CD14-positive monocyte (primary cell): ENCODE measurements at regions of chr5 and their contacts with region 1.

Region 1: DNA sequence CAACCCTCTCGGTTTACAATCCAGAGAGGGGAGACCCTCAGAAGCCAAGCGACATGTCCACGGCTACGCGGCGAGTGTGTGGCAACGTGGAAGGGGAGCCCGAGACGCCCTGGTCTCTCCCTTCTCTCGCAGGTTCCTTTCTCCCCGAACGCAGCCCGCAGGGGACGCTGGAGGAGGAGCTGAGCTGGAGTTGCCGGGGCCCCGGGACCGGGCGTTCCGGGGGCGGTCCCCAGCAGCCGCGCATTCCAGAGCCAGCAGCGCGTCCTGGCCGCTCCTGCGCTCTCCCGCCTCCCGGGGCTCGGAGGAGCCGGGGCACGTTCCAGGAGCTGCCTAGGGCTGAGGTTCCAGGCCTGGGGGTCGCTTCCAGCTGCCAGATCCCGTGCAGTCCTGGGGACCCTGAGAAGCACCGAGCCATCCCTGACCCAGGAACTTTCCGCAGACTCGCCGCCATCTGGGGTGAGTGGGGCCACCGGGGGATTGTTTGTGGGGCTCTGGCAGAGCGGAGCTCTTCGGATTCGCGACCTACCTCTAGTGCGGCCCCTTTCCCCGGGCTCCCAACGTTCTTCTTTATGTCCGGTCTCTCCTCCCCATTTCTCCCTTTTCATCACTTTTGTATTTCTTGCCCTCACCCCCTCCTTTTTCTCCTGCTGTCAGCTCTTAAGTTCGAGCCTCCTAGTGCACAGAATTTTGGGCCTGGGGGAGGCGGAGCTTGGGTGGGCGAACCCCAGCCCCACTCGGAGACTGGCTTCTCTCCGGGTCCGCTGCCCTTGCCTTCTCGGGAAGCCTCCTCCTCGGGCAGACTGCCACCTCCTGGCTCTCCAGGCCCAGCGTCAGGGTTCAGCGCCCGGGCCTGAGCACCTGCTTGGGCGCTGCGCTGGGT is at the start of gene SMIM3:
- DNase-seq: peak; percentile 59 to 69 (median 66)
- H3K4me3 ChIP-seq: peak within 1 kb of the TSS; percentile 78 to 96 (median 78)
- H3K4me3 Mint-ChIP-seq: peak within 1 kb of the TSS; percentile 99
- H3K27ac ChIP-seq: peak within 1 kb of the TSS; percentile 78 to 86
- H3K27ac Mint-ChIP-seq: peak within 1 kb of the TSS; percentile 92 to 99 (median 97)
- H3K4me1 ChIP-seq: peaks cover 54 to 57% of the 10 kb centered on the region in 2 donors
- H3K4me1 Mint-ChIP-seq: peaks cover 62% of the 10 kb centered on the region
- H3K27me3 ChIP-seq: no peaks in the 10 kb centered on the region
- H3K27me3 Mint-ChIP-seq: no peaks in the 10 kb centered on the region
- CTCF ChIP-seq: peak; percentile 67
- polyA plus RNA-seq, gene SMIM3: 41.7 to 52.2 (median 45.4) TPM

Region 2: DNA sequence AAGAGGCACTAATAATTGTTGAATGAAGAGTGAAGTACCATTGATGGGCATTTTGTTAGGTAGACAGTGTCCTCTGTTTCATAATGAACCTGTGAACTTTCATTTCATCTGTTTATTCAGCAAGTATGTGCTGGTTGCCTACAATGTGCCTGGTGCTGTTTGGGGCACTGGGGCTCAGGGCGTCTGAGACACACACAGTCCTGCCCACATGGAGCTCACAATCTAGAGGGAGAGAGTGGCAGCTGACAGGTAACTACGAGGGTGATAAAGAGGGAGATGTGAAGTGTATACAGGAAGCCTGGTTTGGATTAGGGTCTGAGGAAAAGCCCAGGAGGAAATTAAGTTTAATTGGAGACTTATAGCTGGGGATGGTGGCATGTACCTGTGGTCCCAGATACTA is 299.3 kb before region 1 on chr5:
- intact Hi-C with region 1: loop called in 1 of 2 experiments (anchors 5 kb)
- DNase-seq: peak in 1 of 3 donors; percentile 2
- H3K4me3 ChIP-seq: no peak overlapping the region
- H3K4me3 Mint-ChIP-seq: no peak overlapping the region
- H3K27ac ChIP-seq: no peak overlapping the region
- H3K27ac Mint-ChIP-seq: peak overlapping the region in 6 of 7 donors; percentile 13 to 92 (median 68)
- H3K4me1 ChIP-seq: peaks cover 36 to 49% of the 10 kb centered on the region in 2 donors
- H3K4me1 Mint-ChIP-seq: peaks cover 56% of the 10 kb centered on the region
- H3K27me3 ChIP-seq: no peaks in the 10 kb centered on the region
- H3K27me3 Mint-ChIP-seq: peaks cover 0 to 20% (median 3%) of the 10 kb centered on the region in 3 donors
- CTCF ChIP-seq: no peak

Region 3: GRCh38 chr5:150700594-150701293 is 78.0 kb before region 1 on chr5 and contains the start of gene RBM22:
- intact Hi-C with region 1: loop called in 1 of 2 experiments (anchors 5 kb)
- DNase-seq: peak; percentile 81 to 89 (median 88)
- H3K4me3 ChIP-seq: peak within 1 kb of the TSS; percentile 66 to 95 (median 88)
- H3K4me3 Mint-ChIP-seq: no peak within 1 kb of the TSS
- H3K27ac ChIP-seq: peak within 1 kb of the TSS; percentile 80 to 98
- H3K27ac Mint-ChIP-seq: no peak within 1 kb of the TSS
- H3K4me1 ChIP-seq: peaks cover 15 to 18% of the 10 kb centered on the region in 2 donors
- H3K4me1 Mint-ChIP-seq: peaks cover 13% of the 10 kb centered on the region
- H3K27me3 ChIP-seq: no peaks in the 10 kb centered on the region
- H3K27me3 Mint-ChIP-seq: no peaks in the 10 kb centered on the region
- CTCF ChIP-seq: peak; percentile 85
- polyA plus RNA-seq, gene RBM22: 37.9 to 68.4 (median 47.4) TPM

Region 4: DNA sequence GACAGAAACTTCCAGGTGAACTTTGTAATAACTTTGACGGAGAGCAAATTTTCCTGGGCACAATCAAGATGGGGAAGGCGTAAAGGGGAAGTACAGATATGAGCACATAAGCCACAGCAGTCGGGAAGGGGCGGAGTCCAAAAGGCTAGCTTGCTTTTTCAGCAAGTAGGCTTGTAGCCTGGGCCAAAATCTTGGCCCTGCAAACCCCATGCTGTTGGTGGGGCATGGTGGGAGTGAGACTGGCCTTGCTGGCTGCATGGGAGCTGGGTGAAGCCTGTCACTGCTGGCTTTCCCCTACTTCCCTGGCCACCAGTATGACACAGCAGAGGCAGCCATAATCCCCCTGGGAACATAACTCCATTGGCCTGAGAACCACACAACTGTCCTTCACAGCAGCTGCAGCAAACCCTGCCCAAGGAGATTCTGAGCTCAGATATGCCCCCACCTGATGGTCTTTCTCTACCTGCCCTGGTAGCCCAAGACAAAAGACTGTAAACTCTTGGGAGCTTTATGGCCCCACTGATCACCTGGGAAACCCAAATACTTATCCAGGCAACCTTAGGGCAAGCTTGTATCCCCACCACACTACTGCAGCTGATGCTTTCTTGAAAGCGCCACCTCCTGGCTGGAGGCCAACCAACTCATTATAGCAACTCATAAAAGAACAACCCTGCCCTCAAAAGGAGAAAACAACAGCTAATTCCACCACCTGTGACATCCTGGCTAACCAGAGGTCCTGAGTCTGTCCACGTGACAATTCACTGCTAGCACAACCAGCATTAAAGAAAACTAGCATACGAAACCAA is 44.0 kb before region 1 on chr5:
- intact Hi-C with region 1: loop called (anchors 5 kb)
- DNase-seq: peak; percentile 82 to 85 (median 83)
- H3K4me3 ChIP-seq: peak overlapping the region; percentile 53 to 95 (median 85)
- H3K4me3 Mint-ChIP-seq: peak overlapping the region; percentile 82 to 89
- H3K27ac ChIP-seq: peak overlapping the region; percentile 80 to 97
- H3K27ac Mint-ChIP-seq: peak overlapping the region; percentile 93 to 99 (median 97)
- H3K4me1 ChIP-seq: peaks cover 19 to 20% of the 10 kb centered on the region in 2 donors
- H3K4me1 Mint-ChIP-seq: peaks cover 40% of the 10 kb centered on the region
- H3K27me3 ChIP-seq: no peaks in the 10 kb centered on the region
- H3K27me3 Mint-ChIP-seq: no peaks in the 10 kb centered on the region
- CTCF ChIP-seq: no peak

Region 5: DNA sequence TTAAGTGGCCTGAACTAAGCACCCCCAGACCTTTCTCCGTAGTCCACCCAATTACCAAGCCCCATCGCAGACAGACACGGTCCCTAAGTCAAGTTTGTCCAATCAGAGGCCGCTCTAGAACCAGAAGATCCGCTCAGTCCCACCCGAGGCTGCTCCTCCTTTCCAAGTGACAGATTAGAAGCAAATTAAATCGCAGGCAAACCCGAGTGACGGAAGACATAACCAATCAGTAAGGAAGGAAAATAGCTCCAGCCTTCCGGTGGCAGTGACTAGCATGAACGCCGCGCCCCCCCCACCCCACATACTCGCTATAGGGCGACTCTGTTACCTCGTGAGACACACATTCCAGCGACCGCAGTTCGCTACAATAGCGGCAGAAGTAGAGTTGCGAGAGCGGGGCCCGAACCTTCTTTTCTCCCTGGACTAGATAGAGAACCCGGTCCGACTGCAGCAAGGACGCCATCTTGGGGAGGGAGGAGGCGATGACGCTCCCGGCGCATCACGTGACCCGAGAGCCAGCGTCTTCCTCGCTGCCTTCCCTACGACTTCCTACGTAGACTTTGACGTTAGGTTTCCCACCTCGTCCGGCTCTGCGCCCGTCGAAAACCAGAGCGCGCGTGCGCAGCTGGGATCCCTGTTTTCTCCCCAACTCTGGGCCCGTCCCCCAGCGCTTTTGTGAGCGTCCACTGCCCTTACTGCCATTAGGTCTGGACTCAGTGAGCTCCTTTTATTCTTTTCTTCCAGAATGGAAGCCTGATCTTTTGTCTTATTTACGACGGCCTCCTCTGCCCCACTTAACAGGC is 20.0 kb before region 1 on chr5 and contains the start of gene DCTN4:
- intact Hi-C with region 1: loop called in 1 of 2 experiments (anchors 2 kb)
- DNase-seq: peak; percentile 98
- H3K4me3 ChIP-seq: peak within 1 kb of the TSS; percentile 59 to 96 (median 86)
- H3K4me3 Mint-ChIP-seq: no peak within 1 kb of the TSS
- H3K27ac ChIP-seq: peak within 1 kb of the TSS; percentile 89 to 98
- H3K27ac Mint-ChIP-seq: peak within 1 kb of the TSS in 1 of 7 donors; percentile 7
- H3K4me1 ChIP-seq: peaks cover 55 to 60% of the 10 kb centered on the region in 2 donors
- H3K4me1 Mint-ChIP-seq: peaks cover 40% of the 10 kb centered on the region
- H3K27me3 ChIP-seq: no peaks in the 10 kb centered on the region
- H3K27me3 Mint-ChIP-seq: peaks cover 0 to 1% (median 0%) of the 10 kb centered on the region in 3 donors
- CTCF ChIP-seq: no peak
- polyA plus RNA-seq, gene DCTN4: 14.6 to 34.4 (median 16.3) TPM

Region 6: DNA sequence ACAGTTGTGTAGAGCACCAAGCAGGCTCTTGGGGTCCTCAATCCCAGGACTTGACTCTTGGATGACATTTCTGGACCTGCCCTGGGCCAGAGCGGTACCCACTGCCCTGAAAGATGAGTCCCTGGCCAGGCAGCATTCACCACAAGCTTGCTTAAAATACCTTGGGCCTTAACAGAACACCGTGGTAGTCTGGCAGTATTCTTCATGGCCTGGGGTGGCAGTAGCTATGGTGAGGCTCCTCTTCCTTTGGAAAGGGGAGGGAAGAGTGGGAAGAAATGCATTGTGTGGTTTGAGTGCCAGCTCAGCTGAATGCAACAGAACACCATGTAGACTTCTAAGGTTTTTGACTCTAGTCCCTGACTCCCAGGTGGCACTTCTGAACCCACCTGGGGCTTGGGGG is 38.2 kb after region 1 on chr5:
- intact Hi-C with region 1: no loop called
- DNase-seq: no peak
- H3K4me3 ChIP-seq: no peak overlapping the region
- H3K4me3 Mint-ChIP-seq: no peak overlapping the region
- H3K27ac ChIP-seq: no peak overlapping the region
- H3K27ac Mint-ChIP-seq: peak overlapping the region in 1 of 7 donors; percentile 1
- H3K4me1 ChIP-seq: no peaks in the 10 kb centered on the region
- H3K4me1 Mint-ChIP-seq: no peaks in the 10 kb centered on the region
- H3K27me3 ChIP-seq: no peaks in the 10 kb centered on the region
- H3K27me3 Mint-ChIP-seq: peaks cover 0 to 3% (median 0%) of the 10 kb centered on the region in 3 donors
- CTCF ChIP-seq: no peak

Region 7: DNA sequence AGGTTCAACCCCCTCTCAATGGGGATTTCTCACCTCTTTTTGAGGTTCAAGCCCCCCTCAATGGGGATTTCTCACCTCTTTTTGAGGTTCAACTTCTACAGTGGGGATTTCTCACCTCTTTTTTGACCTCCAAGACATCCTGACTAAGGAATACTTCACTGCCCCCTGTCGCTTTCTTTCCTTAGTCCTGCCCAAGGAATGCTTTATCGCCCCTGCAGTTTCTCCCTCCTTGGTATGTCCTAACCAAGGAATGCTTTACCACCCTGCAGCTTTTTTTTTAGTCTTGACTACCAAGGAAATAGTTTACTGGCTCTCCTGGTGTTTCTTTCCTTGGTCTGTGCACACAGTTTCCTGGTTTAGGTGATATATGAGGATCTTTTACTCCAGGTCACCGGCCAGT is 57.9 kb after region 1 on chr5:
- intact Hi-C with region 1: no loop called
- DNase-seq: no peak
- H3K4me3 ChIP-seq: no peak overlapping the region
- H3K4me3 Mint-ChIP-seq: no peak overlapping the region
- H3K27ac ChIP-seq: no peak overlapping the region
- H3K27ac Mint-ChIP-seq: no peak overlapping the region
- H3K4me1 ChIP-seq: no peaks in the 10 kb centered on the region
- H3K4me1 Mint-ChIP-seq: no peaks in the 10 kb centered on the region
- H3K27me3 ChIP-seq: no peaks in the 10 kb centered on the region
- H3K27me3 Mint-ChIP-seq: peaks cover 0 to 4% (median 0%) of the 10 kb centered on the region in 3 donors
- CTCF ChIP-seq: no peak